ENCODE measurements at regions of chr2 and their contacts with region 1.

Region 1: GRCh38 chr2:75006041-75006440 is 47.6 kb downstream of the POLE4 start:
- DNase-seq: no peak
- H3K27ac ChIP-seq: no peak overlapping the region
- CTCF ChIP-seq: no peak

Region 2: GRCh38 chr2:75022516-75022915 is 16.5 kb after region 1 on chr2:
- CTCF ChIA-PET with region 1: interaction called, 11 read pairs
- POLR2A ChIA-PET with region 1: no interaction called
- DNase-seq: no peak
- H3K27ac ChIP-seq: no peak overlapping the region
- CTCF ChIP-seq: no peak

Region 3: GRCh38 chr2:75292826-75293225 is 286.8 kb after region 1 on chr2:
- CTCF ChIA-PET with region 1: no interaction called
- POLR2A ChIA-PET with region 1: no interaction called
- DNase-seq: peak; percentile 69
- H3K27ac ChIP-seq: no peak overlapping the region
- CTCF ChIP-seq: no peak

Measured in RWPE1 (cell line).